H1 (cell line): ENCODE measurements at regions of chr2 and their contacts with region 1.

Region 1: DNA sequence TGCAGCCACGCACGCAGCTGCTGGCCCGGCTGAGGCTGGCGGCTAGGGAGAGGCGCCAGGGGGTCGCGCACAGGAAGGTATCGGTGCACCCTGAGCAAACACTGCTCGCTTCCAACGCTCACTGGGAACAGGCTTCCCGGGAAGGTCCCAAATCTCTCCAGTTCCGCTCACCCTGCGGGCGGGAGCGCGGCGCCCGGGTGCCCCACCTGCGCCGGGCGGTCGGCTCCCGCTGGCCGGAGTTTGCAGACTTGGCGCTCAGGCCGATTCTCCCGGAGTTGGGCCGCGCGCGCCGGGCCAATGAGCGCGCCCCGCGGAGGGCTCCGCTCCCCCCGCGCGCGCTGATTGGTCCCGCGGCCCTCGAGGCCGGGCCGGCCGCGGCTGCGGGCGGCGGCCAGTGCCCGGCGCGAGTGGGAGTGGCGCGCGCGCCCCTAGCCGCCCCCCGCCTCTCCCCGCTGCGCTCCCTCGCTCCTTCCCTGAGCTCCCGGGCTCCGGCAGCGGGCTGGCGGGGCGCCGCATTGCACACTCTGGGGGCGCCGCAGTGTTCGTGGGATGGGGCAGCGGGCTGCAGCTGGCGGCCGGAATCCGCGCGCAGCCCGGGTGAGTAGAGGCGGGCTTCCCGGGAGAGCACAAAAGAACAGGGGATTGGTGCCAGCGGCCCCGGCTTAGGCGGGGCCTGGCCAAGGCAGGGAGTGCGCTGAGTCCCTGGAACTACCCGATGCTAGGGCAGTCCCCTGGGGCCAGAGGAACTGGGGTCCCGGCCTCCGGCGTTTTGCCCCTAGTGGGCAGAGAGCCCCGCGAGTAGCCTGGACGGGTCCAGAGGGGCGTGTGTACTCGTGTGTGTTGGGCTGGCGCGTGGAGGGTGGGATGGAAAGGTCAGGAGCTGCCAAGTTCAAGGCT is at the start of gene LYPD6:
- DNase-seq: peak in 1 of 2 experiments; percentile 82
- H3K4me3 ChIP-seq: peak within 1 kb of the TSS; percentile 64 to 89 (median 80)
- H3K27ac ChIP-seq: no peak within 1 kb of the TSS
- H3K4me1 ChIP-seq: peaks cover 0 to 7% (median 4%) of the 10 kb centered on the region in 4 experiments; a peak in 2 of 7 replicates
- H3K27me3 ChIP-seq: no peaks in the 10 kb centered on the region; a peak in 3 of 7 replicates
- CTCF ChIP-seq: no peak
- EP300 ChIP-seq: no peak
- POLR2A ChIP-seq: no peak
- RAD21 ChIP-seq: 0 out of 4 replicates have a peak, but pooled peaks of 1 of the 2 experiments have one; percentile 2
- total RNA-seq, gene LYPD6: 8.8 and 8.9 TPM in 2 replicates

Region 2: DNA sequence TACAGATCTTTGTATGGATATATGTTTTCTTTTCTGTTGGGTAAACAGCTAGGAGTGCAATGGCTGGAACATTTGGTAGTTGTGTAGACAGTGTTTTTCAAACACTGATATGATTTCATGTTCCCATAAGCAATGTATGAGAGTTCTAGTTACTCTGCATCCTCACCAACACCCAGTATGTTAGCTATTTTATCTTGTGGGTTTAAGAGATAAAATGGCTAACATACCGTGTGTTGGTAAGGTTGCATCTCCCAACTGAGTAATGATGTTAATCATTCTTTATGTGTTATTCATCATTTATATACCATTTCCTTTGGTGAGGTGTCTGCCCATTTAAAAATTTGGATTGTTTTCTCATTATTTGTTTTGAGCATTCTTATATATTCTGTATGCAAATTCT is 226.2 kb before region 1 on chr2:
- CTCF ChIA-PET with region 1: no interaction called
- POLR2A ChIA-PET with region 1: no interaction called
- DNase-seq: no peak
- H3K4me3 ChIP-seq: no peak overlapping the region
- H3K27ac ChIP-seq: no peak overlapping the region
- H3K4me1 ChIP-seq: no peaks in the 10 kb centered on the region
- H3K27me3 ChIP-seq: no peaks in the 10 kb centered on the region
- CTCF ChIP-seq: no peak
- EP300 ChIP-seq: no peak
- POLR2A ChIP-seq: no peak
- RAD21 ChIP-seq: no peak

Region 3: GRCh38 chr2:149313512-149313972 is 16.8 kb before region 1 on chr2:
- CTCF ChIA-PET with region 1: interaction called, 22 read pairs
- POLR2A ChIA-PET with region 1: no interaction called
- DNase-seq: peak in 1 of 2 experiments; percentile 64
- H3K4me3 ChIP-seq: no peak overlapping the region; a peak in 1 of 8 replicates
- H3K27ac ChIP-seq: no peak overlapping the region
- H3K4me1 ChIP-seq: peaks cover 0 to 11% (median 7%) of the 10 kb centered on the region in 4 experiments; a peak in 5 of 7 replicates
- H3K27me3 ChIP-seq: no peaks in the 10 kb centered on the region
- CTCF ChIP-seq: peak; percentile 64 to 96 (median 85)
- EP300 ChIP-seq: no peak
- POLR2A ChIP-seq: no peak
- RAD21 ChIP-seq: peak; percentile 83 to 91

Region 4: DNA sequence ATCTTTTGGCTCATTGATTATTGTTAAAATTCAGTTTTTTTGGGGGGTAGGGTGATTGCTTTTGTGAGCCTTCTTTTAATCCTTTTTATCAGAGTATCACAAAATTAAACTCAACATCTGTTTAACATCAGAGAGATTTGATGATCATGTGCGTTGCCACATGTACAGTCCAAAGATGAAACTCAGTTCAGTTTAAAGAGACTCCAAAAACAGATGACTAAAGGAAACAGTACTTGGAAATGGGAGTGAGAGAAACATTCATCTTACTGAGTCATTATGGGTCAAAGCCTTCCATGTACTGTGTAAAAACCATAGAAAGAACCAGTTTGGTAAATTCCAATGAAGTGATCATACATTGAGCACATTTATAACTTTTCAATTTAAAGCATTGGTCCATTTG is 53.0 kb after region 1 on chr2:
- CTCF ChIA-PET with region 1: no interaction called
- POLR2A ChIA-PET with region 1: no interaction called
- DNase-seq: no peak
- H3K4me3 ChIP-seq: no peak overlapping the region
- H3K27ac ChIP-seq: no peak overlapping the region
- H3K4me1 ChIP-seq: peaks cover 0 to 10% (median 1%) of the 10 kb centered on the region in 4 experiments; a peak in 3 of 7 replicates
- H3K27me3 ChIP-seq: no peaks in the 10 kb centered on the region
- CTCF ChIP-seq: no peak
- EP300 ChIP-seq: no peak
- POLR2A ChIP-seq: no peak
- RAD21 ChIP-seq: no peak